ENCODE measurements at regions of chr2 and their contacts with region 1.

Region 1: GRCh38 chr2:182006606-182007005 is 21.0 kb downstream of the PPP1R1C start:
- DNase-seq: no peak
- H3K4me3 ChIP-seq: no peak overlapping the region
- H3K27ac ChIP-seq: no peak overlapping the region
- H3K4me1 ChIP-seq: no peaks in the 10 kb centered on the region
- H3K27me3 ChIP-seq: no peaks in the 10 kb centered on the region
- CTCF ChIP-seq: no peak

Region 2: DNA sequence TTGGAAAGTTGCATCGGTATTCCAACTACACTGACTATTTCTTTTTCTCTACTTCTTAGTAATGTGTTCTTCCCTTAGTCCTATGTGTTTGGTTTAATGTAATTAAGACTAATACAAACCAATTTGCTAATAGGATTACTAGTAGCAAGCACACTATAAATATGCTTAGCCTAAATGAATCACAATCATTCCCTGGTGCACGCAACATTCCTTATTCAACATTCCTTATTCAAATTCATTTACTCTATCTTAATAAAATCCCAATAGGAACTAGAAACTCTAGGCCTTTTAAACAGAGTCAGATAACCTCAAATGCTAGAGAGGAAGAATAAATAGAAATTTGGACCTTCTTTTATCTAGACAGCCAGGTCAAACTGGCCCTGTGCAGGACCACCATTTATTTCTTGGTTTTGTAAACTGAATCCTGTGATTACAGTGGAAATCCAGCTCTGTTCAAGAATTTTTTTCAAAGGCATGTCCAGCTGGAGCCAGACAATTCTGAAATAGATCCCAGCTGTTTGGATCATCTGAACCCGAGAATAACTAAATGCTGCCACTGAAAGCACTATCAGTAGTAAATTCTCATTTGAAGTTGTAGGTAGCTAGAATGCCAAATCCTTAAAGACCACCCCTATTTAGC is 82.2 kb after region 1 on chr2:
- CTCF ChIA-PET with region 1: no interaction called
- dilution Hi-C with region 1: loop called (anchors 5 kb)
- in situ Hi-C with region 1: no loop called
- intact Hi-C with region 1: no loop called
- DNase-seq: no peak
- H3K4me3 ChIP-seq: no peak overlapping the region
- H3K27ac ChIP-seq: no peak overlapping the region
- H3K4me1 ChIP-seq: no peaks in the 10 kb centered on the region
- H3K27me3 ChIP-seq: no peaks in the 10 kb centered on the region
- CTCF ChIP-seq: no peak

Measured in mammary epithelial cell (primary cell).